CD14-positive monocyte (primary cell): ENCODE measurements at regions of chr17 and their contacts with region 1.

Region 1: GRCh38 chr17:57902800-57903759 is 52.1 kb downstream of the CUEDC1 start:
- DNase-seq: peak; percentile 89 to 95 (median 95)
- H3K4me3 ChIP-seq: peak overlapping the region in 1 of 3 experiments; percentile 29
- H3K4me3 Mint-ChIP-seq: peak overlapping the region; percentile 20 to 46
- H3K27ac ChIP-seq: peak overlapping the region; percentile 96 to 98
- H3K27ac Mint-ChIP-seq: peak overlapping the region; percentile 92 to 98 (median 96)
- H3K4me1 ChIP-seq: peaks cover 78 to 91% of the 10 kb centered on the region in 2 donors
- H3K4me1 Mint-ChIP-seq: peaks cover 87% of the 10 kb centered on the region
- H3K27me3 ChIP-seq: no peaks in the 10 kb centered on the region
- H3K27me3 Mint-ChIP-seq: peaks cover 0 to 2% (median 0%) of the 10 kb centered on the region in 3 donors
- CTCF ChIP-seq: no peak

Region 2: GRCh38 chr17:57833179-57833939 is 69.7 kb before region 1 on chr17:
- intact Hi-C with region 1: no loop called
- DNase-seq: peak; percentile 66 to 80 (median 78)
- H3K4me3 ChIP-seq: peak overlapping the region; percentile 29 to 78 (median 69)
- H3K4me3 Mint-ChIP-seq: no peak overlapping the region
- H3K27ac ChIP-seq: peak overlapping the region; percentile 26 to 72
- H3K27ac Mint-ChIP-seq: no peak overlapping the region
- H3K4me1 ChIP-seq: peaks cover 14 to 20% of the 10 kb centered on the region in 2 donors
- H3K4me1 Mint-ChIP-seq: peaks cover 3% of the 10 kb centered on the region
- H3K27me3 ChIP-seq: no peaks in the 10 kb centered on the region
- H3K27me3 Mint-ChIP-seq: peaks cover 0 to 10% (median 2%) of the 10 kb centered on the region in 3 donors
- CTCF ChIP-seq: peak; percentile 97

Region 3: DNA sequence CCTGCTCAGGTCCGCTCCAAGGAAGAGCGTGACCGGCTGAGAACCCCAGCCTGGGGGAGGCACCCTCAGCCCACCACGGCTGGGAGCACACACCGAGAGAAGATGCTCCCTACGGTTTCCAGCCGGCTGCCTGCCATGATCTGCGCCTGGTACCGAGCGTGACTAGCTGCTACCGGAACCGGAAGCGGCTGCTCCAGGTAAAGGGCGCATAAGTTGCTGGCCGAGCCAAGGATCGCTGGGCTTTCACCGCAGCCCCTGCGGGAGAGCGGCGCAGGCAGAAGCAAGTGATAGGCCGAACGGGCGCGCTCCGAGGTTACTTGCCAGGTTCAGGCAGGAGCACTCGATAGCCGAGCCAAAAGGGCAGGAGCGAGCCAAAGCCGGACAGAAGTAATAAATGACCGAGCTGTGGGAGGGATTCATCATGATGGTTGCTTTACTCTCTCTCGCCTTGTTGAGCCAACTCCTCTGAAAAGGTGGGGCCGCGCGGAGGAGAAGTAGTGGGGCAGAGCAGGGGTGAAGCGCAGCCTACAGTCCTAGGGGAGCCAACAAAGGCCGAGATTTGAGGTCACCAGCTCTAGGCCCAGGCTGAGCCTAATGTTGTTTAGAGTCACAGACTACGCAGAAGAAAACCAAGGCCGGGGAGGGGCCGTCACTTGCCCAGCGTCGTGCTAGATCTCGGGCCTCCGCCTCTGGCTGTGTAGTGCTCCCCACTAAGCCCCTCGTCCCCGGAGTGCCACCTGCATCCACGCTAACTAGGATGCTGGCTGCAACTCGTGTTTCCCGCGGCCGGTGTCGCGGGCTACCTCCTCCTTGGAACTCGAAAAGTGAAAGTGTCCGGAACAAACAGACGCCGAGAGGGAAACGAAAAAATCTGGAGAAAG is 53.0 kb before region 1 on chr17 and contains the start of gene MRPS23:
- intact Hi-C with region 1: loop called in 1 of 2 experiments (anchors 10 kb)
- DNase-seq: peak; percentile 94 to 95 (median 95)
- H3K4me3 ChIP-seq: peak within 1 kb of the TSS; percentile 81 to 96 (median 86)
- H3K4me3 Mint-ChIP-seq: peak within 1 kb of the TSS; percentile 98 to 99
- H3K27ac ChIP-seq: peak within 1 kb of the TSS; percentile 90 to 96
- H3K27ac Mint-ChIP-seq: peak within 1 kb of the TSS; percentile 94 to 99 (median 97)
- H3K4me1 ChIP-seq: peaks cover 39 to 42% of the 10 kb centered on the region in 2 donors
- H3K4me1 Mint-ChIP-seq: peaks cover 45% of the 10 kb centered on the region
- H3K27me3 ChIP-seq: no peaks in the 10 kb centered on the region
- H3K27me3 Mint-ChIP-seq: no peaks in the 10 kb centered on the region
- CTCF ChIP-seq: no peak
- polyA plus RNA-seq, gene MRPS23: 14.5 to 40.6 (median 32.7) TPM

Region 4: DNA sequence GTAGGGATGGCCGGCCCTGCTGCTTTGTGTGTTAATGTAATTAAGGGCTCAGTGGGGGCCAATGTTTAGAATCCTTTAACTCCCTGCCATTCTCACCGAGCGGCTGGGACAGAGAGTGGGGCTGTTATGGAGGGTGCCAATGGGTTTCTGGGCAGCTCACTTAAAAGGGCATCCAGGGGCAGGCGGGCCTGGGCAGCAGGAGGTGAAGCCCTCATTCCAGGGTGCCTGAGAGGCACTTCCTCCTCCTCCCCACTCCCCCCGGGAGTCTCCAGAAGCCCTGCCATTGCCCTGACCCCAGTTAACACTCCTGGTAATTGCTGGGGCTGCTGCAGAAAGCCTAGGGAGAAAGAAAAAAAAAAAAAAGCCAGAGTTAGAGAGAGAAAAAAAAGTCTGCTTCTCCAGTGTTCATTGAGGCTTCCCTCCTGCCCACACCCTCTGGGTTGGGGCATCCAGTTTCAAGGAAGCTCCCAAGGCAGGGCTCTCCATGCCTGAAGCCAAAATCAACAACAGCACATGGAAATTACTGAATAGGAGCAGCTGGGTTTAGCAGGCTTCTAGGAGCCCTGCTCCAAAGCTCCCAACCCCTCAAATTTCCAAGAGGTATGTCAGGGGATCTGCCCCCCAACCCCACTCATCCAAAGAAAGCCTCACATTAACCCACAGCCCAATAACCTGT is 24.1 kb after region 1 on chr17:
- intact Hi-C with region 1: no loop called
- DNase-seq: no peak
- H3K4me3 ChIP-seq: no peak overlapping the region
- H3K4me3 Mint-ChIP-seq: no peak overlapping the region
- H3K27ac ChIP-seq: no peak overlapping the region
- H3K27ac Mint-ChIP-seq: peak overlapping the region in 1 of 7 donors; percentile 53
- H3K4me1 ChIP-seq: peaks cover 4 to 7% of the 10 kb centered on the region in 2 donors
- H3K4me1 Mint-ChIP-seq: peaks cover 12% of the 10 kb centered on the region
- H3K27me3 ChIP-seq: no peaks in the 10 kb centered on the region
- H3K27me3 Mint-ChIP-seq: peaks cover 8 to 17% (median 14%) of the 10 kb centered on the region in 3 donors
- CTCF ChIP-seq: no peak

Region 5: GRCh38 chr17:57955183-57955931 is 52.3 kb after region 1 on chr17 and contains the start of gene CUEDC1:
- intact Hi-C with region 1: no loop called
- DNase-seq: peak; percentile 47 to 69 (median 66)
- H3K4me3 ChIP-seq: peak within 1 kb of the TSS; percentile 57 to 83 (median 72)
- H3K4me3 Mint-ChIP-seq: peak within 1 kb of the TSS; percentile 73 to 89
- H3K27ac ChIP-seq: peak within 1 kb of the TSS in 1 of 2 donors; percentile 51
- H3K27ac Mint-ChIP-seq: peak within 1 kb of the TSS in 4 of 7 donors; percentile 31 to 63 (median 44)
- H3K4me1 ChIP-seq: peaks cover 38 to 53% of the 10 kb centered on the region in 2 donors
- H3K4me1 Mint-ChIP-seq: peaks cover 51% of the 10 kb centered on the region
- H3K27me3 ChIP-seq: peaks cover 10 to 31% of the 10 kb centered on the region in 2 donors
- H3K27me3 Mint-ChIP-seq: peaks cover 33 to 47% (median 44%) of the 10 kb centered on the region in 3 donors
- CTCF ChIP-seq: peak; percentile 35
- polyA plus RNA-seq, gene CUEDC1: 4.2 to 31.0 (median 4.3) TPM